Transverse colon (tissue), 4 donors: ENCODE measurements at regions of chr12 and their contacts with region 1.

Region 1: GRCh38 chr12:53098982-53099651 is 1.6 kb downstream of the IGFBP6 start:
- DNase-seq: peak; percentile 89
- H3K4me3 ChIP-seq: peak overlapping the region in 1 of 4 donors; percentile 19
- H3K27ac ChIP-seq: peak overlapping the region; percentile 77 to 88 (median 84)
- H3K4me1 ChIP-seq: peaks cover 18 to 34% (median 23%) of the 10 kb centered on the region in 4 donors
- H3K27me3 ChIP-seq: peaks cover 28% of the 10 kb centered on the region
- CTCF ChIP-seq: peak; percentile 95 to 98 (median 97)
- EP300 ChIP-seq: no peak
- POLR2A ChIP-seq: no peak

Region 2: GRCh38 chr12:52633383-52633782 is 465.7 kb before region 1 on chr12:
- in situ Hi-C with region 1: no loop called
- intact Hi-C with region 1: no loop called
- DNase-seq: no peak
- H3K4me3 ChIP-seq: no peak overlapping the region
- H3K27ac ChIP-seq: no peak overlapping the region
- H3K4me1 ChIP-seq: no peaks in the 10 kb centered on the region
- H3K27me3 ChIP-seq: no peaks in the 10 kb centered on the region
- CTCF ChIP-seq: no peak
- EP300 ChIP-seq: no peak
- POLR2A ChIP-seq: no peak

Region 3: GRCh38 chr12:52645120-52645761 is 453.9 kb before region 1 on chr12:
- in situ Hi-C with region 1: no loop called
- intact Hi-C with region 1: no loop called
- DNase-seq: no peak
- H3K4me3 ChIP-seq: no peak overlapping the region
- H3K27ac ChIP-seq: no peak overlapping the region
- H3K4me1 ChIP-seq: peaks cover 0 to under 1% (median 0%) of the 10 kb centered on the region in 4 donors
- H3K27me3 ChIP-seq: peaks cover 5% of the 10 kb centered on the region
- CTCF ChIP-seq: no peak
- EP300 ChIP-seq: no peak
- POLR2A ChIP-seq: no peak

Region 4: DNA sequence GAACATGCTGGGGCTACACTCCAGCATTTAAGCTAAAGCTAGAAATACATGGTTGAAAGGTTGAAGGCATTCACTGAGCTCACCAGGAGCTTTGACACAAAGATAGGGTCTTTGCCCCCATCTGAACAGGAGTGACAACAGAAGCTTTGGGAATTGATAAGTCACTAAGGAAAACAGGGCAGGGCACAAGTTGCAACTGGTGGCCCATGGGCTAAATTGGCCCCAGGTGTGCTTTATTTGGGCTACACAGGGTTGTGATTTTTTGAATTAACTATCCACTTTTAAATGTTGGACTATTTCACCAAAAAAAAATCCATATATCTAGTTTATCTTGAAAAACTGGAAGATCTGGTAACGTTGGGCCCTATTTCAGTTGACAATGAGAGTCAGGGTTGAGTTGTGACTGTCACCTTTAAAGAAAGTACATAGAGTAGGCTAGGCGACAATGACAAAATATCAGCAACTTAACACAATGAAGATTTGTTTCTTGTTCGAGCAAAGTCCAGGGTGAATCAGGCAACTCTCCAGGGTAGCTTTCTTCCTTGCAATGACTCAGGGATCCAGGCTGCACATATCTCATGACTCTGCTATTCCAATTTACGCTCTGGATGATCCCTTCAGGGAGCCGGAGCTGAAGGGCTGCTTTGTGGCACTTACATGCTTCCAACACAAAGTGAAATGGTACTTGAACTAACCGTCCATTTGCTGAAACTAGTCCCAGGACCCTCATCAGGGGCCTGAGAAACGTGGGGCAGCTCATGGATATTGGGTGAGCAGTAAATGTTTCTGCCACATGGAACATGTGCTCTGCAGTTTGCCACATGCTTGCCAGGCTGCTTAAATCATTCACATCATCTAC is 106.2 kb before region 1 on chr12:
- in situ Hi-C with region 1: no loop called
- intact Hi-C with region 1: no loop called
- DNase-seq: peak; percentile 66
- H3K4me3 ChIP-seq: no peak overlapping the region
- H3K27ac ChIP-seq: peak overlapping the region; percentile 49 to 79 (median 77)
- H3K4me1 ChIP-seq: peaks cover 6 to 37% (median 21%) of the 10 kb centered on the region in 4 donors
- H3K27me3 ChIP-seq: no peaks in the 10 kb centered on the region
- CTCF ChIP-seq: no peak
- EP300 ChIP-seq: no peak
- POLR2A ChIP-seq: no peak

Region 5: DNA sequence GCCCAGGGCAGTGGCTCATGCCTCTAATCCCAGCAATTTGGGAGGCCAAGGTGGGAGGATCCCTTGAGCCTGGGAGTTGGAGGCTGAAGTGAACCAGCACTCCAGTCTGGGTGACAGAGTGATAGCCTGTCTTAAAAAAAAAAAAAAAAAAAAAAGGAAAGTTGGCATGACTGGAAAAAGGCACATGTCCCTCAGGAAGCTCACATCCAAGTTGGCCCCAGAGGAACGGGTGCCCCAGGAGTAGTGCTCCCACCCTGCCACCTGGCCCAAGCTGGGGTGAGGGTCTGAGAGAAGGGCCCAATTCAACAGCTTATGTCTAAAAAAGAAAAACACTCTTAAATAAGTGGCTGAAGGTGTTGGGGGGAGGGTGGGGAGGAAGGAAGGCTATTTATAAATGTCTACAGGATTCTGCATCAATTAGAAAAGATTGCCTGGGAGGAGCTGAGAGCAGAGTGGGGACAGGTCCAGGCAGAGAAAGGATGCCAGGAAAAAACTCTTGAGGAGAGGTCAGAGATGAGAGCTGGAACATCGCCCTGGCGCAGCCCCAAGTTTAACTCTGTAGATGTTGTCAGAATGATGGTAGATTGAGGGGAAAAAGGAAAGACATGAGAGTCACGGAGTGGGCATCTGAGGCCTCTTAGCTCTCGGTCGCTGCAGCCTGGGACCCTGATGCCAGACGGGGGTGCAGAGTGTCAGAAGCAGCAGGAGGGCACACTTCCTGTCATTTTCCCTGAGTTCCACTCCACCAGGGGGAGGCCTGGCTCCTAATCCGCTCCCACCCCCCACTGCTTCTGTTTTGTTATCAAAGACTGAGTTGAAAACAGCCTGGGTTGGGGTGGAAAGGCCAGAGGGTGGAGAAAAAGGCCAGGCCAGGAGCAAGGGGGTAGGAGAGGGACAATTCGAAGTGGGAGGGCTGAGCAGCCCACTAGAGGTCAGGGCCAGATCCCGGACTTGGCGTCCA is 27.2 kb before region 1 on chr12:
- in situ Hi-C with region 1: no loop called
- intact Hi-C with region 1: loop called (anchors 2 kb)
- DNase-seq: peak; percentile 60
- H3K4me3 ChIP-seq: no peak overlapping the region
- H3K27ac ChIP-seq: peak overlapping the region; percentile 53 to 83 (median 70)
- H3K4me1 ChIP-seq: peaks cover 0 to 37% (median 24%) of the 10 kb centered on the region in 4 donors
- H3K27me3 ChIP-seq: no peaks in the 10 kb centered on the region
- CTCF ChIP-seq: no peak
- EP300 ChIP-seq: no peak
- POLR2A ChIP-seq: no peak